ENCODE measurements at regions of chr18 and their contacts with region 1.

Region 1: DNA sequence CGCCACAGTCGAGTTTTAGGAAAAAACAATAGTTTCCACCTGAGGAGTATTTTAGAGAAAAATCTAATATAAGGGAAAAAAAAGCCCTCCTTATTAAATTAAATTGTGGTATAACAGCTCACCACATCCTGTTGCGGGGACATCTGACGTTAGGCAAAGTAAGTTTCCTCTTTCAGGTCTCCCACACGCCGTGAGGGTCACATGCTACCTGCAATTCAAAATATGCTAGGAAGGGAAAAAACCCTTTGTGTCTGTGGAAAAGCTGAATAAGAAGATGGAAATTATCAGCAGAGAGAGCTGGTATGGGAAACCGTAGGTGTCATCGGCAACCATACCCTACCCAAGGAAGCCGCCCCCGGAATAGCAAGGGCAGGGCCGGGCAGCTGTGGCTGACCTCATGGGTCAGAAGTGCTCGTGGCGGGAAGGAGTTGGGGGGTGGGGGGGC is 128.0 kb downstream of the NFATC1 start:
- DNase-seq: peak; percentile 84
- H3K4me3 Mint-ChIP-seq: peak overlapping the region; percentile 72
- H3K27ac Mint-ChIP-seq: peak overlapping the region; percentile 93
- H3K4me1 Mint-ChIP-seq: peaks cover 75% of the 10 kb centered on the region
- H3K27me3 Mint-ChIP-seq: no peaks in the 10 kb centered on the region

Region 2: GRCh38 chr18:79378542-79379250 is 145.1 kb before region 1 on chr18:
- CTCF ChIA-PET with region 1: interaction called, 89 read pairs
- DNase-seq: peak; percentile 85
- H3K4me3 Mint-ChIP-seq: no peak overlapping the region
- H3K27ac Mint-ChIP-seq: no peak overlapping the region
- H3K4me1 Mint-ChIP-seq: peaks cover 7% of the 10 kb centered on the region
- H3K27me3 Mint-ChIP-seq: no peaks in the 10 kb centered on the region

Region 3: DNA sequence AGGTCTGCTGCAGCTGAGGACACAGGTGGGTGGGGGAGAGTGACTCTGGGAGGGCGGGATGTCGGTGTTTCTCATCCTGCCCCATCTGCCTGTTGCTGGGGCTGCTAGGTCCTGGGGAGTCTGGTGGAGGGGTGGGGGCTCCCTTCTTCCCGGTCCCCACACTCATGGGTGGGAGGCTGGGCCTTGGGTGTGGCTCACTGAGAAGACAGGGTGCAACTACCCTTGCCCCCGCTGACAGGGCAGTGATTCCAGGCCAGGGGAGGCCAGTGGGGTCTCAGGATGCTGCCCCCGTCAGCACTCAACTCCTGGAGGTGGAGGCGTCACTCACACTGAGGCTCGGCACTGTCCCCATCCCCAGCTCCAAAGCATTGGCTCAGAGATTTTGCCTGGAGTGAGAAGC is 135.7 kb before region 1 on chr18:
- CTCF ChIA-PET with region 1: interaction called, 89 read pairs
- DNase-seq: peak; percentile 10
- H3K4me3 Mint-ChIP-seq: no peak overlapping the region
- H3K27ac Mint-ChIP-seq: no peak overlapping the region
- H3K4me1 Mint-ChIP-seq: peaks cover 11% of the 10 kb centered on the region
- H3K27me3 Mint-ChIP-seq: peaks cover 51% of the 10 kb centered on the region

Region 4: GRCh38 chr18:79393635-79394533 is 129.9 kb before region 1 on chr18:
- CTCF ChIA-PET with region 1: interaction called, 37 read pairs
- DNase-seq: peak; percentile 63
- H3K4me3 Mint-ChIP-seq: peak overlapping the region; percentile 73
- H3K27ac Mint-ChIP-seq: no peak overlapping the region
- H3K4me1 Mint-ChIP-seq: peaks cover 42% of the 10 kb centered on the region
- H3K27me3 Mint-ChIP-seq: peaks cover 57% of the 10 kb centered on the region

Region 5: GRCh38 chr18:79507076-79507545 is 16.6 kb before region 1 on chr18:
- CTCF ChIA-PET with region 1: interaction called, 12 read pairs
- DNase-seq: peak; percentile 66
- H3K4me3 Mint-ChIP-seq: peak overlapping the region; percentile 59
- H3K27ac Mint-ChIP-seq: peak overlapping the region; percentile 90
- H3K4me1 Mint-ChIP-seq: peaks cover 49% of the 10 kb centered on the region
- H3K27me3 Mint-ChIP-seq: no peaks in the 10 kb centered on the region

Region 6: GRCh38 chr18:79750980-79751571 is 227.3 kb after region 1 on chr18:
- CTCF ChIA-PET with region 1: no interaction called
- DNase-seq: no peak
- H3K4me3 Mint-ChIP-seq: no peak overlapping the region
- H3K27ac Mint-ChIP-seq: no peak overlapping the region
- H3K4me1 Mint-ChIP-seq: peaks cover 3% of the 10 kb centered on the region
- H3K27me3 Mint-ChIP-seq: no peaks in the 10 kb centered on the region

Measured in activated naive CD4-positive, alpha-beta T cell treated with anti-CD3 and anti-CD28 coated beads, Interleukin-2, amount 10 ng/mL, durations not matched to agents 7 days and 5 days (primary cell).